PC-9 (cell line): ENCODE measurements at regions of chr3 and their contacts with region 1.

Region 1: GRCh38 chr3:73502609-73503583 is 121.8 kb downstream of the PDZRN3 start:
- DNase-seq: peak in 1 of 2 experiments; percentile 25
- H3K4me3 ChIP-seq: no peak overlapping the region
- H3K27ac ChIP-seq: no peak overlapping the region
- H3K4me1 ChIP-seq: no peaks in the 10 kb centered on the region
- H3K27me3 ChIP-seq: peaks cover 17% of the 10 kb centered on the region
- CTCF ChIP-seq: peak; percentile 74

Region 2: GRCh38 chr3:71710906-71711494 is 1791.9 kb before region 1 on chr3:
- CTCF ChIA-PET with region 1: no interaction called
- POLR2A ChIA-PET with region 1: no interaction called
- intact Hi-C with region 1: loop called (anchors 1 kb)
- DNase-seq: no peak
- H3K4me3 ChIP-seq: no peak overlapping the region
- H3K27ac ChIP-seq: no peak overlapping the region
- H3K4me1 ChIP-seq: no peaks in the 10 kb centered on the region
- H3K27me3 ChIP-seq: peaks cover 28% of the 10 kb centered on the region
- CTCF ChIP-seq: peak; percentile 61

Region 3: DNA sequence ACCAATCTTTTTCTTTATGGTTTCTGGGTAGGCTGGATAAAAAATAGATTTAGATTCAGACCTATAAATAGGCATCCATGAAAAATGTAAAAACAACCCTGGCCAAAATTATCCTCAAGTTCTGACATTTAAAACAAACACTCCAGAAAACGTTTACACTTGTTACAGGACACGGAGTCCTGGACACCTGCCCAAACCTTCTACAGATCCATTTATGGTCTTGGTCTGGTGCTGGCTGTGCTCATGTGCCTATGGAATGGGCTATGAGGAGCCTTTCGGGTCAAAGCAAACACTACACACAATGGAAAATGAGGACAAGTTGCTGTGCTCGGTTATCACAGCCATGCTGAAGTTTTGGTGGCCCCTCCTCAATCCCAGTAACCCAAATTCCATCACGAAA is 13.7 kb after region 1 on chr3:
- CTCF ChIA-PET with region 1: no interaction called
- POLR2A ChIA-PET with region 1: no interaction called
- intact Hi-C with region 1: no loop called
- DNase-seq: no peak
- H3K4me3 ChIP-seq: no peak overlapping the region
- H3K27ac ChIP-seq: no peak overlapping the region
- H3K4me1 ChIP-seq: no peaks in the 10 kb centered on the region
- H3K27me3 ChIP-seq: peaks cover 13% of the 10 kb centered on the region
- CTCF ChIP-seq: no peak

Region 4: GRCh38 chr3:73546961-73547360 is 44.1 kb after region 1 on chr3:
- CTCF ChIA-PET with region 1: no interaction called
- POLR2A ChIA-PET with region 1: no interaction called
- intact Hi-C with region 1: no loop called
- DNase-seq: no peak
- H3K4me3 ChIP-seq: no peak overlapping the region
- H3K27ac ChIP-seq: no peak overlapping the region
- H3K4me1 ChIP-seq: no peaks in the 10 kb centered on the region
- H3K27me3 ChIP-seq: no peaks in the 10 kb centered on the region
- CTCF ChIP-seq: no peak

Region 5: GRCh38 chr3:73729969-73730440 is 227.1 kb after region 1 on chr3:
- CTCF ChIA-PET with region 1: no interaction called
- POLR2A ChIA-PET with region 1: no interaction called
- intact Hi-C with region 1: no loop called
- DNase-seq: no peak
- H3K4me3 ChIP-seq: no peak overlapping the region
- H3K27ac ChIP-seq: no peak overlapping the region
- H3K4me1 ChIP-seq: no peaks in the 10 kb centered on the region
- H3K27me3 ChIP-seq: no peaks in the 10 kb centered on the region
- CTCF ChIP-seq: no peak

Region 6: DNA sequence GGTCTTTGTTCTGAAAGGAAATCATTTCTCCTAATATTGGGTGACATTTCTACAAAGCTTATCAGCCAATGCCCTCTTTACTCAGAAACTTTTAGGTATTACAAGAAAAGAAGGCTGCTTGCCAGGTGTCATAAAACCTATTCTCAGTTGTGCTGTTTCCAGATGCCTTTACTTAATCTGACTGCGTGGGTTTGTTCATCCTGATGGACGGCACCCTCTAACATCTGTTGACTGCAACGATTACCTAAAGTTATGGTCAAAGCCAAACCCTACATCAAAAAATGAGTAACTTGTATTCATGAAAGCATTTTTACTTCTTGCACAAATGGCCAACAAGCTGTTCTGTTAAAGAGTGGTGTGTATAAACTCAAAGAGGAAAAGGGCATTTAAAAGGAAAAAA is 329.5 kb after region 1 on chr3:
- CTCF ChIA-PET with region 1: no interaction called
- POLR2A ChIA-PET with region 1: no interaction called
- intact Hi-C with region 1: no loop called
- DNase-seq: no peak
- H3K4me3 ChIP-seq: no peak overlapping the region
- H3K27ac ChIP-seq: no peak overlapping the region
- H3K4me1 ChIP-seq: no peaks in the 10 kb centered on the region
- H3K27me3 ChIP-seq: no peaks in the 10 kb centered on the region
- CTCF ChIP-seq: no peak